ENCODE measurements at regions of chr5 and their contacts with region 1.

Region 1: GRCh38 chr5:124888050-124888506 is 141.6 kb upstream of the ZNF608 start:
- DNase-seq: no peak

Region 2: GRCh38 chr5:124461941-124462340 is 426.1 kb before region 1 on chr5:
- intact Hi-C with region 1: no loop called
- DNase-seq: no peak

Region 3: GRCh38 chr5:125026896-125027732 is 139.0 kb after region 1 on chr5:
- intact Hi-C with region 1: no loop called
- DNase-seq: no peak

Region 4: DNA sequence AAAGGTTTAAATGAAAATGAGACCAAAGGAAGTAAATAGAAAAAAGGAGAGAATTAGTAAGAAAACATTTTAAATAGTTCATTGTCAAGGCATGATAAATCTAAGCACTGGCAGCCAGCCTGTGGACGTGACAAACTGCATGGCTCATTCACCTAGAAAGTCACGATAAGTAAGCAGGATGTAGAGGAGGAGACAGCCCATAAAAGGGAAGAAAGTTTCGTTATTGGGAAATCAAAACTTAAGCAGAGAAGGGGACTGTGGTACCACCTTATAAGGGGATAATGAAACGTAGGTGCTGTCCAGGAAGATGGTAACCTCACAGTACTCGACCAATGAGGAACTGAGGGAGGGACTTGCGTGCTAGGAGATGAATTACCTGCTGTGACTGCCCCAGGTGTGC is 1040.6 kb after region 1 on chr5:
- intact Hi-C with region 1: loop called in 1 of 2 experiments (anchors 10 kb)
- DNase-seq: no peak